HepG2 (cell line): ENCODE measurements at regions of chr3 and their contacts with region 1.

Region 1: DNA sequence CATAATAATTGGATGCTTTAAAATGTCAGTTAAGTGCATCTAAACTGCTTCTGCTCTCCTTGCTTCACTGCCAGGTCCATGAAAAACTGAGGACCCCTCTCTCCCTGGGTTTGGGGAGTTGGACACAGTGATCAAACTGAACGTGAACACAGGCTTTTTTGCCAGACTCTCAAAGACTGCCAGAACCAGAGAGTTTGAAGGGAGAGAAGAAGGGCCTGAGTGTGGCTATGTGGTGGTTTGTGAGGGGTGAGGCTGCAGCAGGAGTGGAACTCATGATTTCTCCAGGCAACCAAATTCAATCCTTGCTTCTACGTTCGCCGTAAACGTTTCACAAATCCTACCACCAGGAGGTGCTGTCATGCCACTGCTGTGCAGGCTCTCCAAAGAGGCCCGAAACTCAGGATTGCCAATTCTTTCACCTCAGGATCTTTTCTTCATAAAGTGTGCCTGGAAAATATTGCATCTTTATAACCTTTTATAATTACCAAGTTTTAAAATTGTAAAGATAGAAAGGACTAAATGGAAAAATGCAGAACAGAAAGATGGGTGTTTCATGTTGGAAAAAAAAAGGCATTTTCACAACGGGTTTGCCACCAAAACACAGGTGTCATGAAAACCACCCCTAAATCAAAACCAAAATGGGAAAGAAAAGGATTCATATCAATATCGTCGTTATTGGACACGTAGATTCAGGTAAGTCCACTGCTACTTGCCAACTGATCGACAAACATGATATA is 19.7 kb downstream of the TM4SF4 start:
- DNase-seq: peak; percentile 64
- ATAC-seq: peak; percentile 88
- H3K4me3 ChIP-seq: peak overlapping the region; percentile 46 to 65 (median 62)
- H3K27ac ChIP-seq: peak overlapping the region; percentile 66
- H3K4me1 ChIP-seq: peaks cover 47% of the 10 kb centered on the region
- H3K27me3 ChIP-seq: no peaks in the 10 kb centered on the region
- CTCF ChIP-seq: peak; percentile 91
- EP300 ChIP-seq: no peak
- POLR2A ChIP-seq: no peak; a peak in 1 of 4 replicates
- RAD21 ChIP-seq: peak; percentile 70

Region 2: DNA sequence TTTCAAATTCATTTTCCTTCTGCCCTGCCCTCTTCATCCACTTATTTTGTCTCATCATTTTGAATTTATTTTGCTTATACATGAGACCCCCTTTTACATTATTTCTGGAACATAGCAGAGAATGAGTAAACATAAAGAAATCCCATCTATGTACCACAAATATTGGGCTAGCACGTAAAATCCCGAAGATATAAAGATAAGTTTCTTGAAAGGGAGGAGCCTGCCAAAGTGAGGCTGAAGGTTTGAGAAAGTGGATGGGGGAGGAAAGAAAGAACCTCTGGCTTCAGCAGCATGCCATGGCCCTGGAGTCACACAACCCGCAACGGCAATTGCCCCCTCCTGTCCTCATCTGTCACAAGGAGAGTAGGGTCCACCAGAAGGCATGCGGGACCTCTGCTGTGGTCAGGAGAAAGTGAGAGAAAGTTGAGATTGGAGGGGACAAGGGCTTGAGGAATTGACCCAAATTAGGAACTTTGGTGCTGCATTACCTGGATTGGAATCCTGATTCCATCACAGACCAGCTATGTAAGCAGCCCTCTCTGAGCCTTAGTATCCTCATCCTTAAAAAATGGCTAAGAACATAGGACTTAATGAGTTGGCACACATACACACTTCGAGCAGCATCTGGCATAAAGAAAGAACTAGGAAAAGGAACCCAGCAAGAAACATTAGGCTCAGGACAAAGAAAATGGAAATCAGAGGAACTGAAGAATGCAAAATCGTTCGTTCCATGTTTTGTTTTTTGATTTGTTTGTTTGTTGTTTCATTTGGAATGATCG is 556.5 kb before region 1 on chr3:
- CTCF ChIA-PET with region 1: no interaction called
- POLR2A ChIA-PET with region 1: no interaction called
- in situ Hi-C with region 1: no loop called
- intact Hi-C with region 1: no loop called
- DNase-seq: no peak
- ATAC-seq: no peak
- H3K4me3 ChIP-seq: no peak overlapping the region
- H3K27ac ChIP-seq: no peak overlapping the region
- H3K4me1 ChIP-seq: no peaks in the 10 kb centered on the region
- H3K27me3 ChIP-seq: peaks cover 0 to 18% of the 10 kb centered on the region in 2 experiments; a peak in 3 of 5 replicates
- CTCF ChIP-seq: no peak
- EP300 ChIP-seq: no peak
- POLR2A ChIP-seq: no peak
- RAD21 ChIP-seq: no peak

Region 3: GRCh38 chr3:149291178-149291577 is 203.0 kb before region 1 on chr3:
- CTCF ChIA-PET with region 1: no interaction called
- POLR2A ChIA-PET with region 1: no interaction called
- in situ Hi-C with region 1: no loop called
- intact Hi-C with region 1: loop called (anchors 5 kb)
- DNase-seq: peak; percentile 32
- ATAC-seq: peak; percentile 54
- H3K4me3 ChIP-seq: no peak overlapping the region
- H3K27ac ChIP-seq: no peak overlapping the region
- H3K4me1 ChIP-seq: no peaks in the 10 kb centered on the region
- H3K27me3 ChIP-seq: no peaks in the 10 kb centered on the region
- CTCF ChIP-seq: peak; percentile 60
- EP300 ChIP-seq: no peak
- POLR2A ChIP-seq: no peak
- RAD21 ChIP-seq: no peak

Region 4: DNA sequence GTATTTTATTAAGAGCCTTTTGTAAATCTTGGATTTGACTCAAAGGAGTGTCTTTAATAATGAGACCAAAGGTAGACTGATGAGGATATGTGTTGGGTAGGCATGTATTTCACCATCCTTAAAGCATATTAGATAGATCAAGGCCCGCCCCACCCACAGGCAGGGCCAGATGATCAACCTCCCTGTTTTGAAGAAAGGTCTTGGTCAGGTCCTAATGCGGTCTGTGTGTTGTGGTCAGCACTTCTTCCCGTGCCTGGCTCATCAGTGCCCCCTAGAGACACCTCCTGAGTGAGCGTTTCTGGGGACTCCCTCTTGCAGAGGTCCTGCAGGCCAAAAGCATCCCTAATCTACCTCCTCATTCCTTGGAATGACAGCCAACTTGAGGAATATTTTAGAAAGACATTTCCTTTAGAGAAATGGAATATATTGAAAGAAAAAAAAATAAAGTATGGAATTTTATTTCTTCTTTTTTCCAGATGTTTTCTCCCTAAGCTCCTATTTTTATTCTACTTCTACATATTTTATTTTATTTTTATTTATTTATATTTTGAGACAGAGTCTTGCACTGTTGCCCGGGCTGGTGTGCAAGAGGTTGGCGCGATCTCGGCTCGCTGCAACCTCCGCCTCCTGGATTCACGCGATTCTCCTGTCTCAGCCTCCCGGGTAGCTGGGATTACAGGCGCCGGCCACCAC is 13.7 kb before region 1 on chr3:
- CTCF ChIA-PET with region 1: no interaction called
- POLR2A ChIA-PET with region 1: no interaction called
- in situ Hi-C with region 1: no loop called
- intact Hi-C with region 1: no loop called
- DNase-seq: peak; percentile 85
- ATAC-seq: peak; percentile 98
- H3K4me3 ChIP-seq: no peak overlapping the region
- H3K27ac ChIP-seq: peak overlapping the region; percentile 48
- H3K4me1 ChIP-seq: peaks cover 22% of the 10 kb centered on the region
- H3K27me3 ChIP-seq: no peaks in the 10 kb centered on the region
- CTCF ChIP-seq: peak; percentile 95
- EP300 ChIP-seq: peak in 1 of 2 experiments; percentile 53; a peak in 1 of 4 replicates
- POLR2A ChIP-seq: no peak
- RAD21 ChIP-seq: peak; percentile 95

Region 5: GRCh38 chr3:149523512-149524299 is 29.5 kb after region 1 on chr3:
- CTCF ChIA-PET with region 1: no interaction called
- POLR2A ChIA-PET with region 1: no interaction called
- in situ Hi-C with region 1: no loop called
- intact Hi-C with region 1: no loop called
- DNase-seq: no peak
- ATAC-seq: no peak
- H3K4me3 ChIP-seq: no peak overlapping the region
- H3K27ac ChIP-seq: no peak overlapping the region
- H3K4me1 ChIP-seq: peaks cover 9% of the 10 kb centered on the region
- H3K27me3 ChIP-seq: no peaks in the 10 kb centered on the region
- CTCF ChIP-seq: no peak
- EP300 ChIP-seq: no peak
- POLR2A ChIP-seq: no peak
- RAD21 ChIP-seq: no peak

Region 6: GRCh38 chr3:149771652-149772271 is 277.6 kb after region 1 on chr3:
- CTCF ChIA-PET with region 1: interaction called, 12 read pairs
- POLR2A ChIA-PET with region 1: no interaction called
- in situ Hi-C with region 1: no loop called
- intact Hi-C with region 1: loop called (anchors 1 kb)
- DNase-seq: peak; percentile 25
- ATAC-seq: peak; percentile 91
- H3K4me3 ChIP-seq: no peak overlapping the region
- H3K27ac ChIP-seq: no peak overlapping the region
- H3K4me1 ChIP-seq: no peaks in the 10 kb centered on the region
- H3K27me3 ChIP-seq: 0 out of 5 replicates have a peak, but pooled peaks cover 0 to 9% of the 10 kb centered on the region in 2 experiments
- CTCF ChIP-seq: peak; percentile 75
- EP300 ChIP-seq: no peak
- POLR2A ChIP-seq: no peak
- RAD21 ChIP-seq: no peak